ENCODE measurements at regions of chr7 and their contacts with region 1.

Region 1: GRCh38 chr7:28520074-28521015 is 108.0 kb downstream of the CREB5 start:
- DNase-seq: no peak
- ATAC-seq: peak in 3 of 4 donors; percentile 39 to 76 (median 53)
- H3K4me3 ChIP-seq: no peak overlapping the region
- H3K27ac ChIP-seq: no peak overlapping the region
- H3K4me1 ChIP-seq: peaks cover 0 to 15% (median 6%) of the 10 kb centered on the region in 12 donors
- H3K27me3 ChIP-seq: no peaks in the 10 kb centered on the region
- CTCF ChIP-seq: no peak
- POLR2A ChIP-seq: no peak

Region 2: GRCh38 chr7:28433699-28434219 is 86.6 kb before region 1 on chr7:
- intact Hi-C with region 1: loop called in 1 of 10 experiments (anchors 10 kb)
- DNase-seq: peak in 2 of 5 donors; percentile 32 to 43
- ATAC-seq: peak in 1 of 4 donors; percentile 44
- H3K4me3 ChIP-seq: no peak overlapping the region
- H3K27ac ChIP-seq: no peak overlapping the region
- H3K4me1 ChIP-seq: peaks cover 0 to 13% (median 5%) of the 10 kb centered on the region in 12 donors
- H3K27me3 ChIP-seq: no peaks in the 10 kb centered on the region
- CTCF ChIP-seq: no peak
- POLR2A ChIP-seq: no peak

Region 3: GRCh38 chr7:28840592-28840995 is 320.2 kb after region 1 on chr7:
- intact Hi-C with region 1: loop called in 1 of 10 experiments (anchors 10 kb)
- DNase-seq: no peak
- ATAC-seq: no peak
- H3K4me3 ChIP-seq: no peak overlapping the region
- H3K27ac ChIP-seq: no peak overlapping the region
- H3K4me1 ChIP-seq: peaks cover 0 to 13% (median 0%) of the 10 kb centered on the region in 12 donors
- H3K27me3 ChIP-seq: no peaks in the 10 kb centered on the region
- CTCF ChIP-seq: peak in 10 of 12 donors; percentile 24 to 49 (median 32)
- POLR2A ChIP-seq: no peak

Measured in heart left ventricle (tissue), 16 donors.